ENCODE measurements at regions of chrX and their contacts with region 1.

Region 1: DNA sequence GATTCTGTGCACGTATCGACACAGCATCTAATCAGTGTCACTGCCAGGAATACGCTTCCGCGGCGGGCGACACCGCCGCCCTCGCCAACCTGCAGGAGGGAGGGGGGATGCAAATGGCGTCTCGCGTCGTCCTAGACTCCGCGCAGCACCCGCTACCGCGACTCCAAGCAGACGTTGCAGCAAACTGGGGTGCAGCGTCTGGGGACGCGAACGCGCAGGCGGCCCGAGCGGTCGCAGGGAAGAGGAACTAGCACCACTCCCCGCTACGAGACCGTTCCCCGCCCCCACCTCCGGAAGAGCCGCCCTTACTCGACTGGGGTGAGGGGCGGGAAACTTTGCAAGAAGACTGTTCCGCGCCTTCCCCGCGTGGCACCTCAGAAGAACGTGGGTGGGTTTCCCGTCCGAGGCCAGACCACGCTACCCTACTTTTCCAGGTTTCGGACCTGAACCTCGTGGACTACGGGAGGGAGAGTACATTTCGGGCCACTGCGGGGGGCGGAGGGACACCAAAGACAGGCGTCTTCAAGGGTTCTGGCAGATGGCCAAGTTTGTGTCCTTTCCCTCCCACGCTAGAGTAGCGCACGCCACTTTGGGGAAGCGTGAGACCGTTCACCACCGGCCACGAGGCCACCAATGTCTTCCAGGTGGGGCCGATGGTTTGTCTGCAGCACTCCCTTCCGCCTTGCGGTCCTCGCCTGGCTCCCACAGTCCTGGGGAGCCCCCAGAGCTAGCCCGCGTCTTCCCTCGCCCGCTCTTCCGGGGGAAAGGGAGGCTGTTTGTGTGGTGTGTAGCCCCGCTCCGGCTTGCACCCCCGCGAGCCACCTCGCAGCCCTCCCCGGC is 78.0 kb upstream of the BCOR start:
- DNase-seq: peak; percentile 62 to 90
- ATAC-seq: peak; percentile 39 to 75 (median 47)
- H3K4me3 ChIP-seq: peak overlapping the region; percentile 85
- H3K4me3 Mint-ChIP-seq: peak overlapping the region; percentile 78
- H3K27ac ChIP-seq: peak overlapping the region; percentile 99
- H3K27ac Mint-ChIP-seq: peak overlapping the region; percentile 93
- H3K4me1 ChIP-seq: peaks cover 56% of the 10 kb centered on the region
- H3K4me1 Mint-ChIP-seq: peaks cover 30 to 34% of the 10 kb centered on the region in 2 donors
- H3K27me3 ChIP-seq: no peaks in the 10 kb centered on the region
- H3K27me3 Mint-ChIP-seq: peaks cover 0 to 7% of the 10 kb centered on the region in 2 donors
- CTCF ChIP-seq: no peak

Region 2: DNA sequence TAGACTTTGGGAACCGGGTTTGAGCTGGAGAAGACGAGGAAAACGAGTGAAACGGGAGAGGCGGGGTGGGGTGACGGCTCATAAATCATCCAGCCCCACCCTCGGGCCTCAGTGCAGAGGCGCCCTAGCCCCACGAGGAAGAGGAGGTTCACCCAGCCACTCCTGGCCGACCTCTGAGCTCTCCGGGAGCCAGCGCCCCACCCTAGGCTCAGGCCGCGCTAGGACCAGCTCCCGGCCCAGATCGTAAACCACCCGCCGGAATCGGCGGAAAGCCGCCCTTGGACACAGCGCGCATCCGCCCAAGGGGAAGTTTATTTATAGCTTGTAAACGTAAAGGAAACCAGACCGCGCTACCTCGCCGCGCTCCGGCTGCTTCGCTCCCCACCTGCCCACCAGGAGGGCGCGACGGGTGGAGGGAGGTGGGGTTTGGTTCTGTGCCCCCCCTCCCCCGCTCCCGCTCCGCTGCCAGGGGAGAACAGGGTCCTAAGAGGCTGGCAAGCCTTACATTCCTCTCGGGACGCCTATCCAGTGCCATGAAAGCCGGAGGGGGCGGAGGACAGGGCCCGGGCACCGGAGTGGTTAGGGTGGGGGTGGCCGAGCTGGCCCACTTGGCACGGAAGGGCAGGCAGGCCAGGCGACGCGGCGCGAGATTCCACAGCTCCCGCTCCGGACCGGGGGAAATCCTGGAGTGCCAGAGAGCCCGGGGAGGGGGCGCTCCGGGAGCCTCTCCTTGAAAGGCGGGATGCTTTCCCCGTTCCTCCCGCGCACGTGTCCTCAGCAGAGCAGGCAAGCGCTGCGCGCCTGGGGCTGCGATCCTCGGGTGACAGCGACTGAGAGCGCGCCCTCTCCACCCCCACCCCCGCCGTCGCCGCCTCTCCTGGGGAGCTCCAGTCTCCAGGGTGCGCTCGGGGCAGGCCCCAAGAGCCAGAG is 162.2 kb before region 1 on chrX:
- intact Hi-C with region 1: no loop called
- DNase-seq: peak; percentile 23 to 58
- ATAC-seq: peak; percentile 25 to 45 (median 28)
- H3K4me3 ChIP-seq: peak overlapping the region; percentile 61
- H3K4me3 Mint-ChIP-seq: peak overlapping the region; percentile 84
- H3K27ac ChIP-seq: peak overlapping the region; percentile 76
- H3K27ac Mint-ChIP-seq: peak overlapping the region in 1 of 2 donors; percentile 81
- H3K4me1 ChIP-seq: peaks cover 49% of the 10 kb centered on the region
- H3K4me1 Mint-ChIP-seq: peaks cover 0 to 20% of the 10 kb centered on the region in 2 donors
- H3K27me3 ChIP-seq: peaks cover 3% of the 10 kb centered on the region
- H3K27me3 Mint-ChIP-seq: peaks cover 10 to 22% of the 10 kb centered on the region in 2 donors
- CTCF ChIP-seq: no peak

Region 3: DNA sequence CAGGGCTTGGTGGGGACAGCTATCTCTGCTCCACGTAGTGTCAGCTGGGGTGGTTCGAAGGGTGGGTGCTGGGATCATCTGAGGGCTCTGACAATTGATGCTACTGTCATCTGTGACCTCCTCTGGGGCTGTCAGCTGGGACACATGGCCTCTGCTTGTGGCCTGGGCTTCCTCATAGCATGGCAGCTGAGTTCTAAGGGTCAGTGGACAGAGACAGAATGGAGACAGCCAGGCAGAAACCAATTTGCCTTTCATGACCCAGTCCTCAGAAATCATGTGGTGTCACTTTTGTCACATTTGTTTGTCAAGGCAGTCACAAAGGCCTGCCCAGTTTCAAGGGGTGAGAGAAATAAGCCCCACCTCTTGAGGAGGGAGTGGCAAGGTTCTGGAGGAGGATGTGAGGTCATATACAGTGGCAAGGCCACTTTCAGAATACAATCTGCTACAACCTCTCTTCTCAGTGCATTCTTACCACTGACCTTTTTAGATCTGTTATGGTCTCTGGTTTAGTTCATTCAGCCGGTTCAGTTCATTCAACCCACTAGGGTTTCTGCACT is 25.7 kb after region 1 on chrX:
- intact Hi-C with region 1: loop called (anchors 1 kb)
- DNase-seq: peak; percentile 20 to 62
- ATAC-seq: peak; percentile 86 to 95 (median 93)
- H3K4me3 ChIP-seq: no peak overlapping the region
- H3K4me3 Mint-ChIP-seq: peak overlapping the region; percentile 45
- H3K27ac ChIP-seq: peak overlapping the region; percentile 62
- H3K27ac Mint-ChIP-seq: peak overlapping the region; percentile 73 to 87
- H3K4me1 ChIP-seq: peaks cover 24% of the 10 kb centered on the region
- H3K4me1 Mint-ChIP-seq: peaks cover 6 to 18% of the 10 kb centered on the region in 2 donors
- H3K27me3 ChIP-seq: no peaks in the 10 kb centered on the region
- H3K27me3 Mint-ChIP-seq: no peaks in the 10 kb centered on the region
- CTCF ChIP-seq: no peak

Region 4: GRCh38 chrX:40278340-40279090 is 102.8 kb after region 1 on chrX:
- intact Hi-C with region 1: loop called (anchors 2 kb)
- DNase-seq: peak; percentile 63 to 82
- ATAC-seq: peak; percentile 76 to 88 (median 84)
- H3K4me3 ChIP-seq: no peak overlapping the region
- H3K4me3 Mint-ChIP-seq: peak overlapping the region; percentile 63
- H3K27ac ChIP-seq: peak overlapping the region; percentile 56
- H3K27ac Mint-ChIP-seq: peak overlapping the region; percentile 85 to 95
- H3K4me1 ChIP-seq: peaks cover 41% of the 10 kb centered on the region
- H3K4me1 Mint-ChIP-seq: peaks cover 33% of the 10 kb centered on the region in 2 donors
- H3K27me3 ChIP-seq: no peaks in the 10 kb centered on the region
- H3K27me3 Mint-ChIP-seq: peaks cover 2 to 19% of the 10 kb centered on the region in 2 donors
- CTCF ChIP-seq: no peak